ENCODE measurements at regions of chr10 and their contacts with region 1.

Region 1: GRCh38 chr10:118383699-118384098 is 41.6 kb upstream of the FAM204A start:
- DNase-seq: no peak
- H3K4me3 ChIP-seq: no peak overlapping the region
- H3K27ac ChIP-seq: no peak overlapping the region
- H3K4me1 ChIP-seq: no peaks in the 10 kb centered on the region
- H3K27me3 ChIP-seq: no peaks in the 10 kb centered on the region
- CTCF ChIP-seq: no peak

Region 2: GRCh38 chr10:118341791-118342637 is 41.7 kb before region 1 on chr10 and contains the start of gene FAM204A:
- CTCF ChIA-PET with region 1: no interaction called
- dilution Hi-C with region 1: loop called (anchors 5 kb)
- in situ Hi-C with region 1: no loop called
- intact Hi-C with region 1: no loop called
- DNase-seq: peak; percentile 91
- H3K4me3 ChIP-seq: peak within 1 kb of the TSS; percentile 62 to 87 (median 83)
- H3K27ac ChIP-seq: peak within 1 kb of the TSS; percentile 75
- H3K4me1 ChIP-seq: peaks cover 10% of the 10 kb centered on the region
- H3K27me3 ChIP-seq: no peaks in the 10 kb centered on the region
- CTCF ChIP-seq: no peak
- total RNA-seq, gene FAM204A: 50.3 to 73.2 TPM

Region 3: DNA sequence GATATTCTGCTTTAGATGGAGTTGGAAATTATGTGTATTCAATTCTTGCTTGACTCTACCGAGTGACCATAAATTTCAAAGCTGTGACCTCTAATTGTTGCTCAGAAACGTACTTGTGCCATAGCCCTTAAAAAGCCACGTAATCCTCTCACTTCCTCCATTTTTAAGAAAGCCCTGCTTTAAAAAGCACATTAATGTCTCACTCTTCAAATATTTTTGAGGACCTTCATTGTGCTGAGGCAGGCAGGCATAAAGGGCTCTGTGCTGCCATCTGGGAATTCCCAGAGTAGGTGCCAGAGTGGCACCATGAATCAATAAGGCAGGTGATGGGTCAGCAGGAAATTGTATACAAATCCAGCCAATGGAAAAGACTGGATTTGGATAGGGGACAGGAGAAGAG is 56.1 kb after region 1 on chr10:
- CTCF ChIA-PET with region 1: no interaction called
- dilution Hi-C with region 1: loop called (anchors 5 kb)
- in situ Hi-C with region 1: no loop called
- intact Hi-C with region 1: no loop called
- DNase-seq: no peak
- H3K4me3 ChIP-seq: no peak overlapping the region
- H3K27ac ChIP-seq: no peak overlapping the region
- H3K4me1 ChIP-seq: no peaks in the 10 kb centered on the region
- H3K27me3 ChIP-seq: no peaks in the 10 kb centered on the region
- CTCF ChIP-seq: no peak